Heart right ventricle (tissue), 16 donors: ENCODE measurements at regions of chr6 and their contacts with region 1.

Region 1: DNA sequence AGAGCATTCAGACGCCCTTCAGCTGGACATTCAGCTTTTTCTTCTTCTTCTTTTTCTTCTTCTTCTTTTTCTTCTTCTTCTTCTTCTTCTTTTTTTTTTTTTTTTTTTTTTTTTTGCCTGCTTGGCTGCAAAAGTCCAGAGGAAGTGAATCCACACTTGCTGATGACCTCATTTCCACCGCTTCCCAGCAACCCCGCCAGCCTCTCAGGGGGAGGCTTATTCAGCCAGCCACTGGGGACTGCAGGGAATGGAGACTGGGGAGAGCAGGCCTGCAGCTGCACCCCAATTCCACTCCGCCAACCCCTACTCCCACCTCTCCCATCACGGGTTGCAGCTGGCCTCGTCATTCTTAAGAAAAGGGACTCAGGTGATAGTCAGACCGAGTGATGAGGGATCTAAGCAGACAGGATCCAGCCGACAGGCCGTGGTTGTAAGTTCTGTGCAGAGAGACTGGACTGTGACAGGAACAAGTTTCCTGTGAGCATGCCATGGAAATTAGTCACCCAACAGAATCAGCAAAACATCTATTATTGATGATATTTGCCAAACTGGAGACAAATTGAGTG is 59.0 kb upstream of the QKI start:
- DNase-seq: peak; percentile 72 to 85
- ATAC-seq: peak; percentile 78 to 95 (median 89)
- H3K4me3 ChIP-seq: peak overlapping the region in 7 of 10 donors; percentile 2 to 42 (median 20)
- H3K27ac ChIP-seq: peak overlapping the region in 9 of 10 donors; percentile 55 to 91 (median 78)
- H3K4me1 ChIP-seq: peaks cover 4 to 48% (median 29%) of the 10 kb centered on the region in 9 donors
- H3K27me3 ChIP-seq: no peaks in the 10 kb centered on the region
- CTCF ChIP-seq: no peak

Region 2: DNA sequence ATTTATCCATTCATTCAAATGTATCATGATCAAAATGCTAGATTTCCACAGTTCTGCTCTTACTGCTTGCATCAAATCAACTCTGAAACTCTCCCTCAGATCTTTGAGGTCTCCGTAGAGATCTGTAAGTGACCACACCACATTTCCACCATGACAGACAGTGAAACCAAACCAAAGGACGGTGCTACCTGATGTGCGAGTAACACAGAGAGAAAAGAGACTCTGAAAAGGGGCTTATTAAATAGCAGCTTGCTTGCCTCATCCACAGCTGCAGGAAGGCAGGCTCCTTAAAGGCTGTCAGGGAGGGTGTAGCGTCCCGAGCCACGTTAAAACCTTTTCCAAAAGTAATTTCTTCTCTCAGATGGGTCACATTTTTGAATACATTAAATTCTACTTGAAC is 291.9 kb before region 1 on chr6:
- intact Hi-C with region 1: no loop called
- DNase-seq: no peak
- ATAC-seq: no peak
- H3K4me3 ChIP-seq: no peak overlapping the region
- H3K27ac ChIP-seq: no peak overlapping the region
- H3K4me1 ChIP-seq: peaks cover 0 to 10% (median 0%) of the 10 kb centered on the region in 9 donors
- H3K27me3 ChIP-seq: no peaks in the 10 kb centered on the region
- CTCF ChIP-seq: no peak

Region 3: DNA sequence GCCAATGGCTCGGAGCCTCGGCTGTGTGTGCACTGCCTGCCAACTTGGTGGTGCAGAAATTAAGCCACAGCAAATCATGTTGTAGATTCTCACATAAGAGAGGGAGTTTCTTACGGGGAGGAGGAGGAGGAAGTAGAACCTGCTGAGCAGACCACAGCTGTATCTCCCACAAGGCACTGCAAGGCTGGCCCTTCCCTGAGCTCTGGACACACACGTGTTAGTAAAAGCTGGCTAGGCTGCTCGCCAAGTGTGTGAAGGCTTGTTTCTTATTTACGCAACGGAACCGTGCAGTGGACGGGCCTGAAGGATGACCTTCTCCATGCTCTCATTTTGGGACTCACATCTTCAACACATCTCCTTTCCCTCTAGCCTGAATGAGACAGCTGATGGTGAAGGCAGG is 43.3 kb after region 1 on chr6:
- intact Hi-C with region 1: loop called in 4 of 10 experiments (anchors 5 to 10 kb)
- DNase-seq: peak in 1 of 2 donors; percentile 34
- ATAC-seq: peak; percentile 19 to 75 (median 50)
- H3K4me3 ChIP-seq: no peak overlapping the region
- H3K27ac ChIP-seq: peak overlapping the region in 1 of 10 donors; percentile 56
- H3K4me1 ChIP-seq: peaks cover 0 to 47% (median 18%) of the 10 kb centered on the region in 9 donors
- H3K27me3 ChIP-seq: no peaks in the 10 kb centered on the region
- CTCF ChIP-seq: no peak

Region 4: GRCh38 chr6:163405412-163406309 is 50.2 kb after region 1 on chr6:
- intact Hi-C with region 1: loop called in 3 of 10 experiments (anchors 5 to 10 kb)
- DNase-seq: peak; percentile 68 to 69
- ATAC-seq: peak; percentile 86 to 93 (median 91)
- H3K4me3 ChIP-seq: peak overlapping the region in 9 of 10 donors; percentile 13 to 50 (median 39)
- H3K27ac ChIP-seq: peak overlapping the region; percentile 75 to 95 (median 92)
- H3K4me1 ChIP-seq: peaks cover 11 to 51% (median 32%) of the 10 kb centered on the region in 9 donors
- H3K27me3 ChIP-seq: no peaks in the 10 kb centered on the region
- CTCF ChIP-seq: no peak